Panc1 (cell line): ENCODE measurements at regions of chrX and their contacts with region 1.

Region 1: GRCh38 chrX:19334945-19335626 is 8.6 kb upstream of the PDHA1 start:
- DNase-seq: no peak
- ATAC-seq: no peak
- H3K4me3 ChIP-seq: no peak overlapping the region
- H3K27ac ChIP-seq: no peak overlapping the region
- H3K4me1 ChIP-seq: no peaks in the 10 kb centered on the region
- H3K27me3 ChIP-seq: no peaks in the 10 kb centered on the region
- CTCF ChIP-seq: peak; percentile 56

Region 2: GRCh38 chrX:18390941-18391538 is 944.0 kb before region 1 on chrX:
- CTCF ChIA-PET with region 1: interaction called, 4 read pairs
- POLR2A ChIA-PET with region 1: no interaction called
- in situ Hi-C with region 1: no loop called
- intact Hi-C with region 1: loop called (anchors 2 kb)
- DNase-seq: no peak
- ATAC-seq: no peak
- H3K4me3 ChIP-seq: no peak overlapping the region
- H3K27ac ChIP-seq: no peak overlapping the region
- H3K4me1 ChIP-seq: no peaks in the 10 kb centered on the region
- H3K27me3 ChIP-seq: no peaks in the 10 kb centered on the region
- CTCF ChIP-seq: peak; percentile 54; the same call in 1 of the 2 replicates

Region 3: GRCh38 chrX:18973527-18974192 is 361.4 kb before region 1 on chrX:
- CTCF ChIA-PET with region 1: interaction called, 13 read pairs
- POLR2A ChIA-PET with region 1: no interaction called
- in situ Hi-C with region 1: no loop called
- intact Hi-C with region 1: no loop called
- DNase-seq: no peak
- ATAC-seq: no peak
- H3K4me3 ChIP-seq: no peak overlapping the region
- H3K27ac ChIP-seq: no peak overlapping the region
- H3K4me1 ChIP-seq: no peaks in the 10 kb centered on the region
- H3K27me3 ChIP-seq: no peaks in the 10 kb centered on the region
- CTCF ChIP-seq: no peak

Region 4: GRCh38 chrX:19017271-19017670 is 317.8 kb before region 1 on chrX:
- CTCF ChIA-PET with region 1: interaction called, 4 read pairs
- POLR2A ChIA-PET with region 1: no interaction called
- in situ Hi-C with region 1: no loop called
- intact Hi-C with region 1: loop called (anchors 1 kb)
- DNase-seq: no peak
- ATAC-seq: peak; percentile 65; the same call in 1 of the 2 replicates
- H3K4me3 ChIP-seq: no peak overlapping the region
- H3K27ac ChIP-seq: no peak overlapping the region
- H3K4me1 ChIP-seq: no peaks in the 10 kb centered on the region
- H3K27me3 ChIP-seq: no peaks in the 10 kb centered on the region
- CTCF ChIP-seq: peak; percentile 77